Activated CD8-positive, alpha-beta T cell treated with anti-CD3 and anti-CD28 coated beads for 36 hours (primary cell): ENCODE measurements at regions of chr14 and their contacts with region 1.

Region 1: DNA sequence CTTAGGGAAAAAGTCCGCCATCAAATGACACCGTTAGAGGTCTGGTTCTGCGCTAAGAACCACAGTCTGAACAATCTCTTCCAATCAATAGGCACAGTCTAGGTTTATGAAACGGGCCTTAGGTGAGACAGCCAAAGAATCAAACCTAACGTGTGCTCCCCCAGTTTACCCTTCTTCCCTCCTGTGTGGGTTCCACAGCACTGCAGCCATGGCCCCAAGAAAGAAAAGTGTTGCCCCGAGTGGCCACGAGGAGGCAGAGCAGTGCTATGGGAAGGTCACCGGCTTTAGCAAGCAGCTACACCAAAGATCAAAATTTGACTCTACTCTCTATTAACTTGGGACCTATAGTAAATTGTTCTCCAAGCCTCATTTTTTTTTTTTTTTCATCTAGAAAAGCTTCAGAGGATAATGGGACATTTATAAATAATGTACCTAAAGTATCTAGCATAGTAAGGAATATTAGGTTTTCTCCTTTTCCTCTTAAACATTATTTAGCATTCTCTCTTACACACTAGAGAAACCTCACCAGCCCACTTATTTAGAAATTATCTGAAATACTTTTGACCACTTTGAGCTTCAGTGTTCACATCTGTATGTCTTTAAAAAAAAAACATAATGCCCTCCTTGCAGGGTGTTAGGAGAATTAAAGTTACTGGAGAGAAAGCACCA is 70.2 kb upstream of the GPHB5 start:
- DNase-seq: peak; percentile 74
- ATAC-seq: peak; percentile 92
- H3K4me3 Mint-ChIP-seq: no peak overlapping the region
- H3K27ac Mint-ChIP-seq: no peak overlapping the region
- H3K4me1 Mint-ChIP-seq: peaks cover 4% of the 10 kb centered on the region
- H3K27me3 Mint-ChIP-seq: no peaks in the 10 kb centered on the region
- CTCF ChIP-seq: peak; percentile 81

Region 2: DNA sequence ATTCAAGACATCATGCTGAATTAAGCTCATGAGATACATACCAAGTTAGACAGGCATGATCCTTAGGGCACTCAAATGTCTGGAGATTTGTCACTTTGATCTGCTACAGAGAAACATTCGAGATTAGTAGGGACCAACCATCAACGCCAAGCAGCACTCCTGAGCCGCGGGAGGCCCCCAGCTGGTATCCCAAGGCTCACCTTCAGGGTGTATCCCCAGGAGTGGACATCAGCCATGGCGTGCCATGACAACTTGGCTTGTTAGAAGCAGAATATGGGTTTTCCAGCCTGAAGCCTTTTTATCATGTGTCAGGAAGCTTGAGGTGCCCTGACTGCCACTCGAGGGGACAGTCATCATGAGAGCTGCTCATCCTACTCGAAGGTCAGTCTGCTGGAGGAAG is 31.1 kb before region 1 on chr14:
- CTCF ChIA-PET with region 1: no interaction called
- POLR2A ChIA-PET with region 1: no interaction called
- intact Hi-C with region 1: no loop called
- DNase-seq: no peak
- ATAC-seq: no peak
- H3K4me3 Mint-ChIP-seq: no peak overlapping the region
- H3K27ac Mint-ChIP-seq: no peak overlapping the region
- H3K4me1 Mint-ChIP-seq: no peaks in the 10 kb centered on the region
- H3K27me3 Mint-ChIP-seq: peaks cover 7% of the 10 kb centered on the region
- CTCF ChIP-seq: no peak

Region 3: DNA sequence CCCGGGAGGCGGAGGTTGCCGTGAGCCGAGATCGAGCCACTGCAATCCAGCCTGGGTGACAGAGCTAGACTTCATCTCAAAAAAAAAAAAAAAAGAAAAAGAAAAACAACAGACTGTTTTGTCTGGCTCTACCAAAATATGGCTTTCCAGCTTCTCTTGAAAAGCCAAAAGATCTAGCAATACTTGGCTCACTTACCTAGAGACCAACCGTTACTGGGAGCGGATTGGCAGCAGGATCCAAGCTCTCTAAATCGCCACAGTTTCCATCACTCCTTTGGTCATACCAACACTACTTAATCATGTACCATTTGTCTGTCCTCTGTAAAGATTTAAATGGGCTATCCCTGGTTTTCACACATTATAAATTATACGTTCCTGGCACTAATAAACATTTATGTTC is 17.4 kb after region 1 on chr14:
- CTCF ChIA-PET with region 1: interaction called, 11 read pairs
- POLR2A ChIA-PET with region 1: interaction called, 3 read pairs
- intact Hi-C with region 1: no loop called
- DNase-seq: no peak
- ATAC-seq: no peak
- H3K4me3 Mint-ChIP-seq: no peak overlapping the region
- H3K27ac Mint-ChIP-seq: no peak overlapping the region
- H3K4me1 Mint-ChIP-seq: peaks cover 10% of the 10 kb centered on the region
- H3K27me3 Mint-ChIP-seq: no peaks in the 10 kb centered on the region
- CTCF ChIP-seq: no peak

Region 4: GRCh38 chr14:63543000-63543825 is 154.3 kb after region 1 on chr14 and contains the start of gene PPP2R5E:
- CTCF ChIA-PET with region 1: interaction called, 15 read pairs
- POLR2A ChIA-PET with region 1: no interaction called
- intact Hi-C with region 1: loop called (anchors 5 kb)
- DNase-seq: peak; percentile 99
- ATAC-seq: peak; percentile 98
- H3K4me3 Mint-ChIP-seq: peak within 1 kb of the TSS; percentile 96
- H3K27ac Mint-ChIP-seq: peak within 1 kb of the TSS; percentile 85
- H3K4me1 Mint-ChIP-seq: peaks cover 30% of the 10 kb centered on the region
- H3K27me3 Mint-ChIP-seq: no peaks in the 10 kb centered on the region
- CTCF ChIP-seq: no peak
- total RNA-seq, gene PPP2R5E: 39.5 to 39.8 TPM